Heart left ventricle (tissue), 16 donors: ENCODE measurements at regions of chr1 and their contacts with region 1.

Region 1: GRCh38 chr1:185733818-185734771 is at the start of gene HMCN1:
- DNase-seq: peak; percentile 83 to 87 (median 84)
- ATAC-seq: peak; percentile 87 to 96 (median 94)
- H3K4me3 ChIP-seq: peak within 1 kb of the TSS; percentile 34 to 77 (median 62)
- H3K27ac ChIP-seq: peak within 1 kb of the TSS; percentile 47 to 84 (median 74)
- H3K4me1 ChIP-seq: peaks cover 0 to 18% (median 0%) of the 10 kb centered on the region in 12 donors
- H3K27me3 ChIP-seq: peaks cover 0 to 30% (median 0%) of the 10 kb centered on the region in 9 donors
- CTCF ChIP-seq: peak in 9 of 12 donors; percentile 7 to 46 (median 35)
- POLR2A ChIP-seq: peak in 1 of 2 donors; percentile 87
- total RNA-seq, gene HMCN1: 3.3 to 14.1 (median 6.2) TPM

Region 2: GRCh38 chr1:185559684-185560331 is 174.3 kb before region 1 on chr1:
- intact Hi-C with region 1: no loop called
- DNase-seq: peak; percentile 33 to 56 (median 48)
- ATAC-seq: peak; percentile 77 to 92 (median 84)
- H3K4me3 ChIP-seq: no peak overlapping the region
- H3K27ac ChIP-seq: peak overlapping the region in 1 of 12 donors; percentile 9
- H3K4me1 ChIP-seq: peaks cover 0 to 31% (median 1%) of the 10 kb centered on the region in 12 donors
- H3K27me3 ChIP-seq: no peaks in the 10 kb centered on the region
- CTCF ChIP-seq: peak in 10 of 12 donors; percentile 14 to 42 (median 30)
- POLR2A ChIP-seq: no peak

Region 3: GRCh38 chr1:185652348-185652747 is 81.7 kb before region 1 on chr1:
- intact Hi-C with region 1: no loop called
- DNase-seq: no peak
- ATAC-seq: no peak
- H3K4me3 ChIP-seq: no peak overlapping the region
- H3K27ac ChIP-seq: no peak overlapping the region
- H3K4me1 ChIP-seq: peaks cover 0 to 16% (median under 1%) of the 10 kb centered on the region in 12 donors
- H3K27me3 ChIP-seq: no peaks in the 10 kb centered on the region
- CTCF ChIP-seq: no peak
- POLR2A ChIP-seq: no peak

Region 4: DNA sequence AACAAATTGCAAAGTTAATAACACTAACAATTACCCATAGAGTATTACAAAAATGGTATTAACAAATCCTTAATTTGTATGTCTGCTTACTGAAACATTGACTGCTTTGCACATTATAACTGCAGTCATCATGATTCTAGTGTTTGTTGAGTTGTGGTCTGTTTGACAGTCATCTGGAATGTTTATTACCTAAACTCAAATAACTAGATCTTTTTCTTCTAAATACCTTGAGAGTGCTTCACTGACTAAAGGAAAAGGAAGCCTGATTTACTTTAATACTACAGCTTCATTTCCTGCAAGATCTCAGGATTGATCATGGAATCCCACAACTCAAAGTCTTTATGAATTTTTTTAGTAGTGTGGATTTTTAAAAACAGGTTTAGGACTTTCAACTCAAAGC is 70.1 kb after region 1 on chr1:
- intact Hi-C with region 1: loop called in 1 of 10 experiments (anchors 10 kb)
- DNase-seq: no peak
- ATAC-seq: no peak
- H3K4me3 ChIP-seq: no peak overlapping the region
- H3K27ac ChIP-seq: no peak overlapping the region
- H3K4me1 ChIP-seq: peaks cover 0 to 15% (median 0%) of the 10 kb centered on the region in 12 donors
- H3K27me3 ChIP-seq: no peaks in the 10 kb centered on the region
- CTCF ChIP-seq: no peak
- POLR2A ChIP-seq: no peak

Region 5: GRCh38 chr1:186094170-186094569 is 360.1 kb after region 1 on chr1:
- intact Hi-C with region 1: loop called in 1 of 10 experiments (anchors 10 kb)
- DNase-seq: no peak
- ATAC-seq: peak in 1 of 4 donors; percentile 50
- H3K4me3 ChIP-seq: no peak overlapping the region
- H3K27ac ChIP-seq: peak overlapping the region in 8 of 12 donors; percentile 20 to 54 (median 39)
- H3K4me1 ChIP-seq: peaks cover 0 to 19% (median 8%) of the 10 kb centered on the region in 12 donors
- H3K27me3 ChIP-seq: no peaks in the 10 kb centered on the region
- CTCF ChIP-seq: no peak
- POLR2A ChIP-seq: no peak